ENCODE measurements at regions of chr7 and their contacts with region 1.

Region 1: GRCh38 chr7:1169409-1170368 is 9.7 kb upstream of the ZFAND2A start:
- DNase-seq: peak; percentile 97
- ATAC-seq: peak; percentile 99
- H3K4me3 Mint-ChIP-seq: peak overlapping the region; percentile 78
- H3K27ac Mint-ChIP-seq: peak overlapping the region; percentile 92
- H3K4me1 Mint-ChIP-seq: peaks cover 12% of the 10 kb centered on the region
- H3K27me3 Mint-ChIP-seq: no peaks in the 10 kb centered on the region
- CTCF ChIP-seq: peak; percentile 89

Region 2: DNA sequence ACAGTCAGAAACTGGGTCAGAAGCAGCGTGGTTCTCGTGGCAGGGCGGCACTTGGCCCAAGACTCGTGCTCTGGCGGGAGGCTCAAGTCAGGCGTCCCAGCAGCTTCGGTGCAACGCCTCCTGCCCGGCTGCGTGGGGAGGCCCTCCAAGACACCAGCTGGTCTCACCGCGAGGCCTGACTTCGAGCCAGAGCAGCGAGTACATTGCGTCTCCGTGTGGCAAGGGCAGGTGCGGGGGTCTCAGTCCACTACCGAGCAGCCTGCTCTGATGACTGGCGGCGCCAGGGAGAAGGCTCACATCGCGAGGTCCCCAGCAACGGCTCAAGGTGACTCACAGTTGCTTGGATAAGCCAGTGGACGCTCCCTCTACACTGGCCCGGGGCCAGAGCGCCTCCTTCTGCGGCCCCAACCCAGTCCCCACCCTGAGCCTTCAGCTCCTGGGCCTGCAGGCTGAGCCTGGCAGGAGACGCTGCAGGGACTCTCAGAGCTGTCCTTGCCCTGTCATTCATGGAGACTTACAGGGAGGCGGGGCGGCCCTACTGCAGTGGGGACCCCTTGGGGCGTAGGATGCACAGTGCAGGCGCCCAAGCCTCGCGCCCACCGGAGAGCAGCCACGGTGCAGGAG is 400.7 kb before region 1 on chr7:
- CTCF ChIA-PET with region 1: no interaction called
- POLR2A ChIA-PET with region 1: no interaction called
- intact Hi-C with region 1: no loop called
- DNase-seq: peak; percentile 20
- ATAC-seq: peak; percentile 68
- H3K4me3 Mint-ChIP-seq: no peak overlapping the region
- H3K27ac Mint-ChIP-seq: no peak overlapping the region
- H3K4me1 Mint-ChIP-seq: no peaks in the 10 kb centered on the region
- H3K27me3 Mint-ChIP-seq: no peaks in the 10 kb centered on the region
- CTCF ChIP-seq: no peak

Region 3: DNA sequence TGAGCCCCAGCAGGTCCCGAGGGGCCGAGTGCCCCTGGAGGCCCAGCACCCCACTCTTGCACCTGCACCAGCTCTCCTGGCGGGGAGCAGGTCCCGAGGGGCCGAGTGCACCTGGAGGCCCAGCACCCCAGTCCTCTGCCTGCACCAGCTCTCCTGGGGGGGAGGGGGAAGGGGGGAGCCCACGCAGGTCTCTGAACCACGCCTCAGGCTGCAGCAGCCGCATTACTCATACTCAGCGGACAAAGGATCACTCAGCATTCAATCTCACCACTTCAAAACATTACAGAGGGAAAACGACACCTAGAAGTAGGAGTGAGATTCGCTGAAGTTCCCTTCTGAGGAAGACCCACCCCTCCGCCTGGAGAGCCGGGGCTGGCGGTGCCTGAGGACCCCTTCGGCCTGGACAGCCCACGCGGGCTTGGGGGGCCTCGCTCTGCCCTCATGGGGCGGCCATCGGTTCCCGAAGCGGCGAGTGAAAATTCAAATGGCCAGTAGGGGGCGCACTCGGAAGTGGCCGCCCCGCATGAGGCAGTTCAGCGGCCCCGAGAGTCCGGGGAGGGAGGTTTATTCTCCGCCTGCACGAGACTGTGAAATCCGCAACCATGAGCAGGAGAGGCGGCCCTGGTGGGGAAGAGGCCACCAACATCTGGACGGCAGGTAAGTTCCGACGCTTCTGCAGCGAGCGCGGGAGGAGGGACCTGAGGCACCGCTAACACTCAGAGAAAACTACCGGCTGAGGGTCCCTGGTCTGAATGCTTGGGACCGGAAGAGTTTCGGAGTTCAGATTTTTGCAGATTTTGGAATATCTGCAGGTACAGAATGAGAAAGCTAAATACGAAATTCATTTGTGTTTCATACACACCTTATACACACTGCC is 82.9 kb before region 1 on chr7:
- CTCF ChIA-PET with region 1: interaction called, 11 read pairs
- POLR2A ChIA-PET with region 1: no interaction called
- intact Hi-C with region 1: no loop called
- DNase-seq: peak; percentile 85
- ATAC-seq: peak; percentile 92
- H3K4me3 Mint-ChIP-seq: peak overlapping the region; percentile 58
- H3K27ac Mint-ChIP-seq: peak overlapping the region; percentile 46
- H3K4me1 Mint-ChIP-seq: peaks cover 16% of the 10 kb centered on the region
- H3K27me3 Mint-ChIP-seq: no peaks in the 10 kb centered on the region
- CTCF ChIP-seq: peak; percentile 99

Region 4: GRCh38 chr7:1247527-1248059 is 77.9 kb after region 1 on chr7:
- CTCF ChIA-PET with region 1: no interaction called
- POLR2A ChIA-PET with region 1: no interaction called
- intact Hi-C with region 1: no loop called
- DNase-seq: no peak
- ATAC-seq: no peak
- H3K4me3 Mint-ChIP-seq: no peak overlapping the region
- H3K27ac Mint-ChIP-seq: no peak overlapping the region
- H3K4me1 Mint-ChIP-seq: peaks cover 7% of the 10 kb centered on the region
- H3K27me3 Mint-ChIP-seq: peaks cover 67% of the 10 kb centered on the region
- CTCF ChIP-seq: no peak

Region 5: GRCh38 chr7:1268738-1269313 is 99.1 kb after region 1 on chr7:
- CTCF ChIA-PET with region 1: no interaction called
- POLR2A ChIA-PET with region 1: no interaction called
- intact Hi-C with region 1: no loop called
- DNase-seq: no peak
- ATAC-seq: no peak
- H3K4me3 Mint-ChIP-seq: no peak overlapping the region
- H3K27ac Mint-ChIP-seq: no peak overlapping the region
- H3K4me1 Mint-ChIP-seq: no peaks in the 10 kb centered on the region
- H3K27me3 Mint-ChIP-seq: peaks cover 9% of the 10 kb centered on the region
- CTCF ChIP-seq: no peak